Activated CD4-positive, alpha-beta T cell treated with anti-CD3 and anti-CD28 coated beads for 36 hours (primary cell): ENCODE measurements at regions of chr2 and their contacts with region 1.

Region 1: DNA sequence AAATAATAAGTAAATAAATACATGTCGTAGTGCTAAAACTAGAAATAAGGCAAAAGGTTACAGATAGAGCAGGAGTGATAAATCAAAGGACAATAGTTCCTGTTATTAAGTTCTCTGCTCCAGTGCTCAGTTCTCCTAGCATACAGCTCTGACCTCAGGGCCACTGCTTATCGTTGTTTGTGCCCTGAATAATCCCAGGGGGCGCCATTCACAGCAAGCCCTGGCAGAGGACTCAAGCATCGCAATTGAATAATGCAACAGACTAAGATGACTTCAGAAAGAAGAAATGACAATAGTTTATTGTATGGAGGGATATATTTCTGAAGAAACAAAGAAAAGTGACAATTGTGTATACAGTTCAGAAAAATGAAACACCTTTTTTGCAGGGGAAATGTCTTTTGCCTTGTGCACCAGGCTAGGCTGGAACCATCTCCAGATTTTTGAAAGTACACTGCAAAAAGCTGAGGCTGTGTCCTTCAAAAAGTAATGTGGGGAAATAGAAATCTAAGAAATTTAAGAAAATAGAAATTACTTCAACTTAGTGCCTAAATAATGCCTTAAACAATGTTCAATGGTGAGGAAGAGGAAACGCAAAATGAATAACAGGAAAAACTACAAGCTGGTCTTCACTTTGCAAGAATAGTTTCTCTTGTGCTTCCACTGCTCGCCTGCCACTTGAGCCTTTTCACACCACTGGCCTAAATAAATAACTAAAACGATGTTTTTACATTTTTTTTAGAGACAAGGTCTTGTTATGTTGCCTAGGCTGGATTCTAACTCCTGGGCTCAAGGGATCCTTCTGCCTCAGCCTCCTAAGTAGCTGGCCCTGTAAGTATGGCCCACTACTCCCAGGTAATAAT is 19.0 kb upstream of the CCNYL1 start:
- DNase-seq: peak; percentile 66
- ATAC-seq: peak; percentile 75
- H3K4me3 Mint-ChIP-seq: no peak overlapping the region
- H3K27ac Mint-ChIP-seq: no peak overlapping the region
- H3K4me1 Mint-ChIP-seq: peaks cover 9% of the 10 kb centered on the region
- H3K27me3 Mint-ChIP-seq: no peaks in the 10 kb centered on the region

Region 2: GRCh38 chr2:207328944-207329386 is 363.5 kb before region 1 on chr2:
- CTCF ChIA-PET with region 1: no interaction called
- POLR2A ChIA-PET with region 1: no interaction called
- intact Hi-C with region 1: no loop called
- DNase-seq: peak; percentile 18
- ATAC-seq: peak; percentile 5
- H3K4me3 Mint-ChIP-seq: peak overlapping the region; percentile 55
- H3K27ac Mint-ChIP-seq: peak overlapping the region; percentile 88
- H3K4me1 Mint-ChIP-seq: peaks cover 62% of the 10 kb centered on the region
- H3K27me3 Mint-ChIP-seq: no peaks in the 10 kb centered on the region

Region 3: GRCh38 chr2:207704078-207704477 is 11.6 kb after region 1 on chr2:
- CTCF ChIA-PET with region 1: interaction called, 11 read pairs
- POLR2A ChIA-PET with region 1: no interaction called
- intact Hi-C with region 1: no loop called
- DNase-seq: no peak
- ATAC-seq: no peak
- H3K4me3 Mint-ChIP-seq: no peak overlapping the region
- H3K27ac Mint-ChIP-seq: no peak overlapping the region
- H3K4me1 Mint-ChIP-seq: peaks cover 6% of the 10 kb centered on the region
- H3K27me3 Mint-ChIP-seq: no peaks in the 10 kb centered on the region